Prostate gland (tissue), 2 donors: ENCODE measurements at regions of chr6 and their contacts with region 1.

Region 1: DNA sequence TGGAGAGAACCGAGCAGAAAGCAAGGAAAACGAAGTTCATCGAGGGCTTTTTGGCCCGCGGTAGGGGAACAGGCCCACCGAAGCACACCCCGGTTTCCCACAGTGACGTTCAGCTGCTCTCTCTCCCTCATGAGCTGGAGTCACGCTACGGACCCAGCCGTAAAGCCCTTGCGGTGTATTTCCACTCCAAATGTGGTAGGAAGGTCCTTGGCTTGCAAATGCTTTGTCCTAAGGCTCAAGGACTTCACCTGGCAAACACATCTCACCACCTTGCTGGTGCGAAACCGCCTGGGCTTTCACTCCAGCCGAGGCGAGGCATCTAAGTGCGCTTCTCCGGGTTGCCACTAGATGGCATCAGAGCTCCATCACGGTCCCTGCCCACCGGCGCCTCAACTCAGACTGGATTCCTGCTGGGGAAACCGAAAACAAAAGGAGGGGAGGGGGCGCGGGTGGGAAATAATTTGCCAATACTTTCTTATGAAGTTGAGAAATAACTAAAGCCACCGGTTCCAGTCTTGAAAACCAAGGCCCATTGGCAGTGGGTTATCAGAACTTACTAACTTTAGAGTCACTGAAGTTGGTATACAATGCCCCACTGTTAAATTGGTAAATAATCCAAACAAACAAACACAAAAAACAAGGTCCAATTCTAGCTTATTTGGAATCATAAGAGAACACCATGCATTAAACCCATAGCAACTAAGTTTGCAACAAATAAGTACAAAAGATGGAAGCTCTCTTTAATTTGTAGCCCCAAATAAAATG is 13.4 kb upstream of the FOXC1 start:
- DNase-seq: peak; percentile 50
- H3K4me3 ChIP-seq: no peak overlapping the region
- H3K27ac ChIP-seq: no peak overlapping the region
- H3K4me1 ChIP-seq: no peaks in the 10 kb centered on the region
- H3K27me3 ChIP-seq: no peaks in the 10 kb centered on the region
- CTCF ChIP-seq: peak; percentile 92 to 94 (median 93)
- POLR2A ChIP-seq: no peak

Region 2: DNA sequence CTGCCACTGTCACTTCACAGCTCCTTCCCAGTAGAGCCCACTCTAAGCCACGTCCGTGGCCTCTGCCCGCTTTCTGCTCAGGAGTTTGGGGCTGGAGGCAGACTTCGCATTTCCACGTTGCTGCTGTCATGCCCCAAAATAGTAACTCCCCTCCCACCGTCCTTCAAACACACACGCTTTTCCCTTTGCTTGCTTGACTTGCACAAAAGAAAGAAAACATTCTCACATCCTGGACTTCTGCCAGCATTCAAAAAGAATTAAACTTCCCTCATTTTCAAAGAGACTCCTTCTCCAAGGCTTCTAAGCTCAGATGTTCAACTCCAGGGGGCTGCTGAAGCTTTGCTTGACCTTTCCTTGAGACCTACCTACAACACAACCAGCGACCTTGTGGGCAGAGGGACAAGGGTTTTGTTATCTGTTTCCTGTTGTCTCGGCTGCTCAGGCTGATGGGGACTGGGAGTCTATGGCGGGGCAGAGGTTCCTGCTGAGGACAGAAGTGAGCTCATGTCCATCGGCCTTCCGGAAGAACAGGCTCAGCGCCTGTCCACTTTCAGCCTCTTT is 548.2 kb before region 1 on chr6:
- intact Hi-C with region 1: no loop called
- DNase-seq: no peak
- H3K4me3 ChIP-seq: no peak overlapping the region
- H3K27ac ChIP-seq: no peak overlapping the region
- H3K4me1 ChIP-seq: no peaks in the 10 kb centered on the region
- H3K27me3 ChIP-seq: no peaks in the 10 kb centered on the region
- CTCF ChIP-seq: no peak
- POLR2A ChIP-seq: no peak

Region 3: GRCh38 chr6:2749969-2750600 is 1153.8 kb after region 1 on chr6:
- intact Hi-C with region 1: loop called (anchors 5 kb)
- DNase-seq: peak; percentile 44
- H3K4me3 ChIP-seq: no peak overlapping the region
- H3K27ac ChIP-seq: no peak overlapping the region
- H3K4me1 ChIP-seq: no peaks in the 10 kb centered on the region
- H3K27me3 ChIP-seq: no peaks in the 10 kb centered on the region
- CTCF ChIP-seq: peak; percentile 67 to 79 (median 72)
- POLR2A ChIP-seq: no peak